ENCODE measurements at regions of chr11 and their contacts with region 1.

Region 1: DNA sequence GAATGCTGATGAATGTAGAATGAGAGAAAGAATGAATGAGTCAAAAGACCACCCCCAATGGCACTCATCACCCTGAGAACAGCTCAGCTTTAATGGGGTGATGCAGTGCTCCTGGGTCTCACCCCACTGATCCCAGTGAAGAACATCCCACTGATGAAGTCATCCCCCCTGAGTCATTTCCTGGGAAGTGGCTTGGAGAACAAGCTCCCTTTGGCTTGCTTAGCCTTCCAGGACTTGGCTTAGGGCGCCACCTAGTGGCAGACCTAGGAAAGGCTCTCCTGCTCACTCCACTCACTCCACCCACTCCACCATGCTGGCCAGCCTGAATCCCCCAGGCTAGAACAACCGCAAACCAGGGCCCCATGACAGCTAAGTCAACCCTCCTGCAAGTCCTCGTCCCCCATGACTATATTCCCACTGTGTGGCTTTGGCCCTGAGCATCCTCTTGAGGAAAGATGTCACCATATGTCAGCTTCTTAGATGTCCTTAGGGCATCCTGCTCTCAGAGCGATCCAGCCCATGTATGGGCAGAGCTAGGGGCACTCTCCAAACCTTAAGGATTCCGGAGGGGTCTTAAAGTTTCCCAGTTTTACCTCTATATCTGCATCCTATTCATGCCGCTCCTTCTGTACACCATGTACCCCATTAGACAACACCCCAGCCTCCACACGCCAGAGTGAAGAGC is 17.8 kb upstream of the TMPRSS13 start:
- DNase-seq: peak; percentile 88 to 96 (median 91)
- H3K4me3 ChIP-seq: no peak overlapping the region
- H3K27ac ChIP-seq: no peak overlapping the region
- H3K4me1 ChIP-seq: peaks cover 0 to 4% of the 10 kb centered on the region in 2 donors
- H3K27me3 ChIP-seq: no peaks in the 10 kb centered on the region
- CTCF ChIP-seq: peak; percentile 98 to 99 (median 99)
- POLR2A ChIP-seq: no peak

Region 2: GRCh38 chr11:117438371-117439000 is 508.5 kb before region 1 on chr11:
- intact Hi-C with region 1: loop called in 1 of 2 experiments (anchors 10 kb)
- DNase-seq: no peak
- H3K4me3 ChIP-seq: no peak overlapping the region
- H3K27ac ChIP-seq: no peak overlapping the region
- H3K4me1 ChIP-seq: peaks cover 0 to 3% of the 10 kb centered on the region in 2 donors
- H3K27me3 ChIP-seq: peaks cover 8% of the 10 kb centered on the region
- CTCF ChIP-seq: no peak
- POLR2A ChIP-seq: no peak

Region 3: DNA sequence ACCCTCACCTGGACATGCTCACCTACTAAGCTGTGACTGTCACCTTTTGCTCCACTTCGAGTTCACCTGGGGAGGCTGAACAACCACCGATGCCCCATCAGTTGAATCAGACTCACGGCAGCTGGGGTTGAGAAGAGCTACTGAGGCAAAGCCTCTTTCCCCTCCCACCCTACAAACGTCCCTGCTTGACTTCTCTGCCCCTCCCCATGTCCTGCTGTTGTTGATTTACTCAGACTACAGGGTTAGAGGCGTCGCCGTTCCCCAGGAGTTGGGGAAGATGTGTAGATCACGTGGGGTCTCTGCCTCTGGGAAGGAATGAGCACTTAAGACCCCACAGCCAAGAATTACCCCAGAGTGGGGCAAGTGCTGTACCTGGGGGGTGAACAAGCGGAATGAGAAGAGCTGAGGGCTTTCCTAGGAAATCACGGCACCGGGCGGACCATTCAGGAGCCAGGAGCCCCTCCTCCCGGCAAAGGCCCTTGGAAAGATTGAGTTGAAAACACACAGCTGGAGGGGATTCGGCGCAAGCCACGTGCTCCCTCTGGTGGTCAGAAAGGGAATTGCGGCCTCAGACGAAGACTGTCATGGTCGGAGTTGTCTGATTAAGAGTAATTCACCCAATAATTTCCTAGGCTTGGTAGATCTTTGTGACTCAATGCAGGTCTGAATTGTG is 129.5 kb before region 1 on chr11:
- intact Hi-C with region 1: loop called in 1 of 2 experiments (anchors 5 kb)
- DNase-seq: peak; percentile 89 to 97 (median 89)
- H3K4me3 ChIP-seq: no peak overlapping the region
- H3K27ac ChIP-seq: peak overlapping the region in 4 of 5 donors; percentile 84 to 93 (median 89)
- H3K4me1 ChIP-seq: peaks cover 38 to 43% of the 10 kb centered on the region in 2 donors
- H3K27me3 ChIP-seq: no peaks in the 10 kb centered on the region
- CTCF ChIP-seq: peak; percentile 99 to 100 (median 100)
- POLR2A ChIP-seq: no peak

Region 4: GRCh38 chr11:117843666-117844484 is 103.1 kb before region 1 on chr11:
- intact Hi-C with region 1: loop called (anchors 2 kb)
- DNase-seq: peak; percentile 67 to 92 (median 83)
- H3K4me3 ChIP-seq: no peak overlapping the region
- H3K27ac ChIP-seq: no peak overlapping the region
- H3K4me1 ChIP-seq: peaks cover 0 to 11% of the 10 kb centered on the region in 2 donors
- H3K27me3 ChIP-seq: no peaks in the 10 kb centered on the region
- CTCF ChIP-seq: peak; percentile 97 to 100 (median 99)
- POLR2A ChIP-seq: no peak

Region 5: DNA sequence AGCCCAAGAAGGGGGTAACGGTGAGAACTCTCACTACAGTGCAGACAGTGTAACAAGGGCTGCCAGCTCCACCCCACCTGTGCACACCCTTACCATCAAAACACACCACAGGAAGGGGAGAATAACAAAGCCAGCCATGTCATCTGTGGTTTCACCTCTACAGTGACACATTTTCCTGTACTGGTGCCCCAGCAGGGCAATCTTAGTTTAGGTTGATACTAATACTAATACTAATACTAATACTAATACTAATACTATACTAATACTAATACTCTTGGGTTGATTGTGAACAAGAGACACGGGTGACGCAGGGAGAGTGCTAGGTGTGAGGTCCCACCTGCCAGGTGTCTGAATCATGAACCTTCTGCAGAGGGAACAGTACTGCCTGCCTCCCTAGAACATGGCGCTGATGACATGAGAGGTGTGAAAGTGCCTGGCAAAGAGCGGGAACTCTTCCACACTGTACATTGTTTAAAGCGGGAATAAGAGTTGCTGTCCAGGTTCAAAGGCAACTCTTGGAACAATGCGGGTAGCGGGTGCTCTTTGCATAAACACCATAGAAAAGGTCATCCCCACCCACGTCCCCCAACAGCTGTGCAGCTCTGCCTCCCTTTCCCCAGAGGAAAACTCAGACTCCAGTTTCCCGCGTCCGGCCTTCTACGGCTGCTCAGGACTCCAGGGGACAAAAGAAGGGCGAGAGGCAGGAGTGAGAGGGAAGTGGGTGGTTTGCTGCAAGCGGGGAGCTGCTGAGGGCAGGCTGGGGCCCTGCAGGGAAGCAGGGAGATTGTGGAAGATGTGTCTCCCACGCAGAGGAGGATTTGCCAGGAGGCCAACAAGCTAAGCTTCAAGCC is 104.9 kb after region 1 on chr11:
- intact Hi-C with region 1: loop called (anchors 5 kb)
- DNase-seq: peak in 2 of 7 donors; percentile 16 to 46
- H3K4me3 ChIP-seq: no peak overlapping the region
- H3K27ac ChIP-seq: no peak overlapping the region
- H3K4me1 ChIP-seq: no peaks in the 10 kb centered on the region
- H3K27me3 ChIP-seq: no peaks in the 10 kb centered on the region
- CTCF ChIP-seq: no peak
- POLR2A ChIP-seq: no peak

Region 6: DNA sequence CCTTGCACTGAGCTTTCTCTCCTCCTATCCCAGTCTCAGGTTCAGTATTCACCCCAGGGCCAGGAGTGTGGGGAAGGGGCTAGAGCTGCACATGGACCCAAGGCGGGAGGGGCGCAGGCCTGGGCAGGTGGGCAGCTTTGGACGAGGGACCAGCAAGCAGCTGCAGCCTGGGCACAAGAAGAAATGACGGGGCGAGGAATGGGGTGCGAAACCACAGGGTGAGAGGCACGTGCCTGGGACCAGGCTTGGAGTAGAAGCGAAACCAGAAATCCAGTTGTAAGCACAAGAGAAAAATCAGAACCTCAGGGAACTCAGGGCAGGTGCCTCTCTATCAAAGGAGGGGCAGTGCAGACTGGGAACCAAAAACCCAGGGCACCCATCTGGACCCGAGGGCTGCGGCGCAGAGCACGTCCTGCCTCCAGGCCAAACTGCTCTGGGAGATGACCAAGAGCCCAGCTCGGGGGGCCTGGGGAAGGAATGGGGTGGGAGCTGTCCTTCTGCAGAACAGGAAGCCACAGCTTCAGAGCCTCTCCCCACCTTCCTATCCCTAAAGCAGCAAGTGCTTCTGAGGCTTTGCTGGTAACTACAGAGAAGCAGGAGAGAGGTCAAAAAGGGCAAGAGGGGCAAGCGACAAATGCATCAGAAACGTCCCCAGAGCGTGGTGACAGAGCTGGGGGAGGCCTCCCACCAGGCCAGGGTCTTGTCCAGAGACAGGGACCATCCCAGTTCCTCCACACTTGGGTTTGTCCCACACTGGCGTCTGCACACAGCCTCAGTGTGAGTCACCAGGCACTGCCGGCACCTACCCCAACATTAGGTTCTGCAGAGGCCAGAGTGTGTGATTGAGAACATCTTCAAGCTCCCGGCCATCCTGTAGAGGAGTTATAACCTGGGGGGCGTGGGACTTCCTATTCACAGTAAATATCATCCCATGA is 111.6 kb after region 1 on chr11:
- intact Hi-C with region 1: loop called (anchors 5 kb)
- DNase-seq: peak in 1 of 7 donors; percentile 10
- H3K4me3 ChIP-seq: no peak overlapping the region
- H3K27ac ChIP-seq: no peak overlapping the region
- H3K4me1 ChIP-seq: no peaks in the 10 kb centered on the region
- H3K27me3 ChIP-seq: no peaks in the 10 kb centered on the region
- CTCF ChIP-seq: no peak
- POLR2A ChIP-seq: no peak

Region 7: DNA sequence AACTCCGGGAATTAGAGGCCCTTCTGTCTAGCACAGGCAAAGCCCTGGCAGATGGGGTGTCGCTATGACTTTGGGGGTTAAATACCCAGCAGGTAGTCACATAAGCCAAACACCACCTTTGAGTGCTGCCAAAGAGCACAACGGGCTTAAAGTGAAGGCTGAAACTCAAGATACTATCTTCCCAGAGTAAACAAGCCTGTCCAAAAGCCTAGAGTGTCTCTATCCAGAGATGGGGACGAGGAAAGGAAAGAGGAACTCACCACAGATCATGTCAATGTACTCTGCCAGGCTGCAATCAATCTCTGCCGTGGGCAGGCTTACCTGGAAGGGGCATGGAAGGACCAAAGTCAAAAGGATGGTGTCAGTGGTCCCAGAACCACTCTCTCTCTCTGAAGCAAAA is 598.5 kb after region 1 on chr11:
- intact Hi-C with region 1: no loop called
- DNase-seq: no peak
- H3K4me3 ChIP-seq: no peak overlapping the region
- H3K27ac ChIP-seq: no peak overlapping the region
- H3K4me1 ChIP-seq: peaks cover under 1 to 3% of the 10 kb centered on the region in 2 donors
- H3K27me3 ChIP-seq: no peaks in the 10 kb centered on the region
- CTCF ChIP-seq: no peak
- POLR2A ChIP-seq: no peak